ENCODE measurements at regions of chr5 and their contacts with region 1.

Region 1: GRCh38 chr5:76689321-76690036 is 26.4 kb upstream of the F2R start:
- DNase-seq: peak; percentile 85
- H3K4me3 ChIP-seq: no peak overlapping the region
- H3K27ac ChIP-seq: peak overlapping the region; percentile 90
- H3K27me3 ChIP-seq: no peaks in the 10 kb centered on the region
- CTCF ChIP-seq: no peak

Region 2: GRCh38 chr5:76673125-76673524 is 16.4 kb before region 1 on chr5:
- CTCF ChIA-PET with region 1: no interaction called
- POLR2A ChIA-PET with region 1: interaction called, 14 read pairs
- DNase-seq: no peak
- H3K4me3 ChIP-seq: no peak overlapping the region
- H3K27ac ChIP-seq: no peak overlapping the region
- H3K27me3 ChIP-seq: no peaks in the 10 kb centered on the region
- CTCF ChIP-seq: no peak

Measured in AG04450 (cell line).